HepG2 (cell line): ENCODE measurements at regions of chr1 and their contacts with region 1.

Region 1: GRCh38 chr1:167066333-167067122 is 23.6 kb downstream of the GPA33 start:
- DNase-seq: peak; percentile 29
- ATAC-seq: peak; percentile 96
- H3K4me3 ChIP-seq: peak overlapping the region in 1 of 3 experiments; percentile 55; a peak in 1 of 6 replicates
- H3K27ac ChIP-seq: no peak overlapping the region
- H3K4me1 ChIP-seq: no peaks in the 10 kb centered on the region
- H3K27me3 ChIP-seq: peaks cover 3 to 44% of the 10 kb centered on the region in 2 experiments; a peak in 3 of 5 replicates
- CTCF ChIP-seq: peak; percentile 93
- EP300 ChIP-seq: no peak
- POLR2A ChIP-seq: no peak
- RAD21 ChIP-seq: peak; percentile 95

Region 2: GRCh38 chr1:166947398-166948043 is 119.0 kb before region 1 on chr1:
- CTCF ChIA-PET with region 1: no interaction called
- POLR2A ChIA-PET with region 1: no interaction called
- in situ Hi-C with region 1: no loop called
- intact Hi-C with region 1: no loop called
- DNase-seq: no peak
- ATAC-seq: no peak
- H3K4me3 ChIP-seq: no peak overlapping the region
- H3K27ac ChIP-seq: no peak overlapping the region
- H3K4me1 ChIP-seq: no peaks in the 10 kb centered on the region
- H3K27me3 ChIP-seq: peaks cover 0 to 31% of the 10 kb centered on the region in 2 experiments; a peak in 3 of 5 replicates
- CTCF ChIP-seq: no peak
- EP300 ChIP-seq: no peak
- POLR2A ChIP-seq: no peak
- RAD21 ChIP-seq: no peak

Region 3: GRCh38 chr1:167121375-167122120 is 55.0 kb after region 1 on chr1:
- CTCF ChIA-PET with region 1: interaction called, 7 read pairs
- POLR2A ChIA-PET with region 1: no interaction called
- in situ Hi-C with region 1: loop called (anchors 5 kb)
- intact Hi-C with region 1: loop called (anchors 1 kb)
- DNase-seq: no peak
- ATAC-seq: no peak; the same call in 2 of the 3 replicates
- H3K4me3 ChIP-seq: no peak overlapping the region
- H3K27ac ChIP-seq: no peak overlapping the region
- H3K4me1 ChIP-seq: no peaks in the 10 kb centered on the region
- H3K27me3 ChIP-seq: peaks cover 6 to 40% of the 10 kb centered on the region in 2 experiments; a peak in 3 of 5 replicates
- CTCF ChIP-seq: no peak
- EP300 ChIP-seq: no peak
- POLR2A ChIP-seq: no peak
- RAD21 ChIP-seq: no peak

Region 4: GRCh38 chr1:167207940-167208623 is 141.6 kb after region 1 on chr1:
- CTCF ChIA-PET with region 1: interaction called, 3 read pairs
- POLR2A ChIA-PET with region 1: no interaction called
- in situ Hi-C with region 1: loop called (anchors 10 kb)
- intact Hi-C with region 1: loop called (anchors 1 kb)
- DNase-seq: no peak
- ATAC-seq: no peak
- H3K4me3 ChIP-seq: no peak overlapping the region; a peak in 1 of 6 replicates
- H3K27ac ChIP-seq: no peak overlapping the region
- H3K4me1 ChIP-seq: no peaks in the 10 kb centered on the region
- H3K27me3 ChIP-seq: no peaks in the 10 kb centered on the region; a peak in 1 of 5 replicates
- CTCF ChIP-seq: no peak
- EP300 ChIP-seq: no peak
- POLR2A ChIP-seq: no peak
- RAD21 ChIP-seq: no peak

Region 5: DNA sequence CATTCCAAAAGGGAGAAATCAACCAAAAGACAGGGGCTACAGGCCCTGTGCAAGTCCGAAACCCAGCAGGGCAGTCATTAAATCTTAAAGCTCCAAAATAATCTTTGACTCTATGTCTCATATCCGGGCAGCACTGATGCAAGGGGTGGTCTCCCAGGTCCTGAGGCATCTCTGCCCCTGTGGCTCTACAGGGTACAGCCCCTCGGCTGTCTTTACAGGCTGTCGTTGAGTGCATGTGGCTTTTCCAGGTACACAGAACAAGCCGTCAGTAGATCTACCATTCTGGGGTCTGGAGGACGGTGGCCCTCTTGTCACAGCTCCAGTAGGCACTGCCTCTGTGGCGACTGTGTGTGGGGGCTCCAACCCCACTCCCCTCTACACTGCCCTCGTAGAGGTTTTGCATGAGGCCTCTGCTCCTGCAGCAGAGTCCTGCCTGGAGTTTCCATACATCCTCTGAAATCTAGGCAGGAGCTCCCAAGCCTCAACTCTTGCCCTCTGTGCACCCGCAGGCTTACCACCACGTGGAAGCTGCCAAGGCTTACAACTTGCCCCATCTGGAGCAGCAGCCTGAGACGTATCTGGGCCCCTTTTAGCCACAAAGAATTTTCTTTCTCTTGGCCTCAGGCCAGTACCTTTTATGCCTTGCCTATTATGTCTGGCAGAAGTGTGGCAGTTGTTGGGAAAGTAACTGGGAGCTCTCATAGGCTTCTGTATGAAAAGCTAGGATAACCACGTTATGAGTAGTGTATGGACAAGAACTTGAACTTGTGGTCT is 206.7 kb after region 1 on chr1:
- CTCF ChIA-PET with region 1: no interaction called
- POLR2A ChIA-PET with region 1: no interaction called
- in situ Hi-C with region 1: no loop called
- intact Hi-C with region 1: loop called (anchors 5 kb)
- DNase-seq: no peak
- ATAC-seq: no peak
- H3K4me3 ChIP-seq: no peak overlapping the region
- H3K27ac ChIP-seq: no peak overlapping the region
- H3K4me1 ChIP-seq: peaks cover 5% of the 10 kb centered on the region
- H3K27me3 ChIP-seq: no peaks in the 10 kb centered on the region
- CTCF ChIP-seq: no peak
- EP300 ChIP-seq: no peak
- POLR2A ChIP-seq: no peak
- RAD21 ChIP-seq: no peak

Region 6: DNA sequence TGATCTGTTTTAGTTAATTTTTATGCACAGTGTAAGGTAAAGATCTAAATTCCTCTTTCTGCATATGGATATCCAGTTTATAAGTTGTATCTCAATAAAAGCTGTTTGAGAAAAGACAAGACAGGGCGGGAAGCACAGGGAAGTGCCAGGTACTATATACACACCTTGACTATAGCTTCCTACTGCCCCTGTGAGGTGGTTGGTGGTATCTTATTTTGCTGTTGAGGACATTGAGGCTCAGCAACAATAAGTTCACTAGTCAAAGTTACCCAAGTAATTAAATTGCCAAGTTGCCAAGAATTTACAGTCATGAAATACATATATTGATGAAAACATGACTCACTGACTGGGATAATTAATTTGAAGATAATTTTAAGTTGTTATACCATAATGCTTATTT is 342.7 kb after region 1 on chr1:
- CTCF ChIA-PET with region 1: no interaction called
- POLR2A ChIA-PET with region 1: no interaction called
- in situ Hi-C with region 1: no loop called
- intact Hi-C with region 1: loop called (anchors 2 kb)
- DNase-seq: peak; percentile 24
- ATAC-seq: peak; percentile 86
- H3K4me3 ChIP-seq: no peak overlapping the region
- H3K27ac ChIP-seq: no peak overlapping the region
- H3K4me1 ChIP-seq: no peaks in the 10 kb centered on the region
- H3K27me3 ChIP-seq: no peaks in the 10 kb centered on the region
- CTCF ChIP-seq: peak; percentile 48
- EP300 ChIP-seq: no peak
- POLR2A ChIP-seq: no peak
- RAD21 ChIP-seq: no peak

Region 7: GRCh38 chr1:167454894-167455785 is 388.6 kb after region 1 on chr1:
- CTCF ChIA-PET with region 1: no interaction called
- POLR2A ChIA-PET with region 1: no interaction called
- in situ Hi-C with region 1: no loop called
- intact Hi-C with region 1: loop called (anchors 5 kb)
- DNase-seq: no peak
- ATAC-seq: peak; percentile 74
- H3K4me3 ChIP-seq: peak overlapping the region; percentile 66 to 79 (median 68)
- H3K27ac ChIP-seq: no peak overlapping the region
- H3K4me1 ChIP-seq: peaks cover 6% of the 10 kb centered on the region
- H3K27me3 ChIP-seq: peaks cover 7 to 49% of the 10 kb centered on the region in 2 experiments
- CTCF ChIP-seq: no peak; the same call in 1 of the 2 replicates
- EP300 ChIP-seq: no peak
- POLR2A ChIP-seq: no peak
- RAD21 ChIP-seq: no peak

Region 8: DNA sequence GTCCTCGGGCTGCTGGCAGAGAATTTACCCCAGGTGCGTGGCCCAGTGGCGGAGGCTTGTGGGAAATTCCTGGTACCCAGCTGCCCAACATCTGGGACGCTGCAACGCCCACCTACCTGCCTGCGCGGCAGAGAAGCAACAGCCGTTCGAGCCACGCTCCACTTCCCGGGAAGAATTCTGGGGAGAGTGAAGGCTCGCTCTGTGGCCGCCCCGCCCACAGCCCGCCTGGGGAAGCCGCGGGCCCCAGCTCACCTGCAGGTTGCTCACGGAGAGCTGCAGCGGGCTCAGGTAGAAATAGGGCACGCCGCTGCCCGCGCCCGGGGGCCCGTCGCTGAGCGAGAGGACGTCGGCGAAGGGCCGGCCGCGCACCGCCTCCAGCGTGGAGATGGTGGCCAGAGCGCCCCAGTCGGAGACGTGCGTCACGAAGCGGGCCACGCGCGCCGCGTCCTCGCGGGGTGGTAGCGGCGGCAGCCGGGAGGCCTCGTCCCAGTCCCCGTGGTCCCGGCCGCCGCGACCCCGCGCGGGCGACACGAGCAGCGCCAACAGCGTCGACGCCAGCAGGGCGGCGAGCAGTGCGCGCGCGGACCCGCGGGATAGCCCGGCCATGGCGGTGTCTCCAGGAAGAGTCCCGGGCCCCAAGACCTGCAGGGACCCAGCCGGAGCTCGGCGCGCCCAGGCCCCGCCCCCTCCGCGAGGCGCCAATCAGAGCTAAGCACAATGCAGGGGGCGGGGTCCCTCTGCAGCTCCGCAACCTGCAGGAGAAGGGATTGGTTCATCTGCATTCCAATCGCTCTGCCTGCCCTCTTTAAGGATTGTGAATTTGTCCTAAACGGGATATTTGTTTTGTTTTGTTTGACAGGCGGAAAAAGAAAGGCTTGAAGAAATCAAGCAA is 486.9 kb after region 1 on chr1 and contains the start of gene CREG1:
- CTCF ChIA-PET with region 1: no interaction called
- POLR2A ChIA-PET with region 1: no interaction called
- in situ Hi-C with region 1: no loop called
- intact Hi-C with region 1: loop called (anchors 1 kb)
- DNase-seq: peak; percentile 88
- ATAC-seq: peak; percentile 100
- H3K4me3 ChIP-seq: peak within 1 kb of the TSS; percentile 57 to 72 (median 58)
- H3K27ac ChIP-seq: no peak within 1 kb of the TSS
- H3K4me1 ChIP-seq: peaks cover 7% of the 10 kb centered on the region
- H3K27me3 ChIP-seq: peaks cover 0 to 4% of the 10 kb centered on the region in 2 experiments; a peak in 1 of 5 replicates
- CTCF ChIP-seq: no peak
- EP300 ChIP-seq: no peak
- POLR2A ChIP-seq: peak; percentile 77 to 82
- RAD21 ChIP-seq: peak; percentile 57; the same call in 1 of the 2 replicates
- total RNA-seq, gene CREG1: 19.1 and 31.3 TPM in 2 replicates